Esophagus squamous epithelium (tissue), 5 donors: ENCODE measurements at regions of chr11 and their contacts with region 1.

Region 1: GRCh38 chr11:126062679-126063506 is at the start of gene CDON:
- DNase-seq: peak; percentile 31
- H3K4me3 ChIP-seq: peak within 1 kb of the TSS; percentile 64 to 92 (median 76)
- H3K27ac ChIP-seq: peak within 1 kb of the TSS; percentile 84 to 92 (median 89)
- H3K4me1 ChIP-seq: peaks cover 4 to 31% (median 9%) of the 10 kb centered on the region in 3 donors
- H3K27me3 ChIP-seq: no peaks in the 10 kb centered on the region
- CTCF ChIP-seq: peak in 4 of 6 experiments; percentile 13 to 60 (median 20)
- POLR2A ChIP-seq: peak in 1 of 4 donors; percentile 52
- total RNA-seq, gene CDON: 2.5 to 5.5 (median 3.4) TPM

Region 2: DNA sequence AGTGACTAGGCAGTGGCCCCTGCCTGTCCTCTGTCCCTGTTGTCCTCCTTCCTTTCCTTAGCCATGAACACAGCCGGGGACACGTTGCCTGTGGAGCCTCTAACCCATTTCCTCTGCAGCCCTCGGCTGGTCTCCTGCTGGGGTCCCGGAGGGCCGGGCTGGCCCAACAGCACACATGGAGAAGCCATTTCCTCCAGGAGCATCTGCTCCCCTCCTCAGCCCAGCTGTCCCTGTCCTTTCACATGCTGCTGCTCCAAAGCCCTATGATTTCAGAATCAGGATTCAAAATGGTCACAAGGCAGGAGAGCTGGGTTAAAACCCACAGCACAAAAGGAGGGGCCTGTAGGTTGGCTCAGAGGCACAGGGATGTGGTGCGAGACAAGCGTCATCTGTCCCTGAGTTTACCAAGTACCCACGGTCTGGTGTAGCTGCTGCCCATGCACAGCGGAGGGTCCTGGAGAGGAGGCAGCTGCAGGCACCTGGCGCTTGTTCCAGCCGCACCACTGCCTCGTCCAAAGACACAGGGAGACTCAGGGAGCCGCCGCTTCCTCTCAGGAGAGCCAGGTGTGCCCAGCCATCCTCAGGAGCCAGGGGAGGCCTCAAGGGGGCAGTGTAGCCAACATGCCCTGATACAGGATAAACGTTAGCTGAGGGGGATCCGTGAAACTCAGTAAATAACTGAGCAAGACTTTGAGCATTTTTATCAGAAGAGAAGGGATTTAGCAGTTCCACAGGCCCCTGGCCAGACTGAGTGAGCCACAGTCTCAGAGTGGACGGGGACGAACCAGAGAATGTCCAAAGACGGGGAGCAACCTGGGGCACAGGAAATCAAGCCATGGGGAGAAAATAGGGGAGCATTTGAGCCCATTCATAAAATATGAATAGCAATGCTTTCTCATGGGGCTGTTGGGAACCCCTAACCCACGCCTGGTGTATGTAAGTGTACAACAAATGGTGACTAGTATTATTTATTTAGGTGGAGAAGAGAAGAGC is 121.0 kb before region 1 on chr11:
- intact Hi-C with region 1: loop called (anchors 10 kb)
- DNase-seq: no peak
- H3K4me3 ChIP-seq: no peak overlapping the region
- H3K27ac ChIP-seq: no peak overlapping the region
- H3K4me1 ChIP-seq: peaks cover 0 to 14% (median 0%) of the 10 kb centered on the region in 3 donors
- H3K27me3 ChIP-seq: peaks cover 0 to 4% (median 0%) of the 10 kb centered on the region in 4 donors
- CTCF ChIP-seq: peak in 5 of 6 experiments; percentile 44 to 60 (median 54)
- POLR2A ChIP-seq: no peak

Region 3: DNA sequence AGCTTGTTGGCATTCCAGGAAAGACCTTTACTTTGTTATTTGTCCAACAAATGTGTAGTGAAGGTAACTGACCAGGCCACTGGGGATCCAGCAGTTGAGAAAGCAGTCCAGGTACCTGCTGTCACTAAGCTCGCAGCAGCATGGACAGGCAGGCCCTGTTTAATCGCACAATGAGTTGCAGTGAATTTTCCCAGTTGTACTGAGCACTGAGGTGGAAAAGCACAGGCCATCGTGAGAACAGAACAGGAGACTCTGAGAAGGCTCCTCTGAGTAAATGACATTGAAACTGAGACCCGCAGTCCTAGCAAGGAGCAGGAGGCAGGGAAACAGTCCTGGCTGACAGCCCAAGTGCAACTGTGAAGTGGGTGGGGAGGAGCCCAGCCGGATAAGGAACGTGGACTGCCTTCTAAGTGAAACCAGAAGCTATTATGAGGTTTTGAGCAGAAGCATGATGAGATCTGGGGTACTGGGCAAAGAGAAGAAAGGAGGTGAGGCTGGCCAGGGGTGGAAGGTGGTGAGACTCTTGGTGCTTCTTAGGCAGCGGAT is 39.6 kb after region 1 on chr11:
- intact Hi-C with region 1: no loop called
- DNase-seq: no peak
- H3K4me3 ChIP-seq: no peak overlapping the region
- H3K27ac ChIP-seq: peak overlapping the region in 1 of 4 donors; percentile 18
- H3K4me1 ChIP-seq: peaks cover 0 to 6% (median 0%) of the 10 kb centered on the region in 3 donors
- H3K27me3 ChIP-seq: peaks cover 0 to 18% (median 0%) of the 10 kb centered on the region in 4 donors
- CTCF ChIP-seq: no peak
- POLR2A ChIP-seq: no peak

Region 4: DNA sequence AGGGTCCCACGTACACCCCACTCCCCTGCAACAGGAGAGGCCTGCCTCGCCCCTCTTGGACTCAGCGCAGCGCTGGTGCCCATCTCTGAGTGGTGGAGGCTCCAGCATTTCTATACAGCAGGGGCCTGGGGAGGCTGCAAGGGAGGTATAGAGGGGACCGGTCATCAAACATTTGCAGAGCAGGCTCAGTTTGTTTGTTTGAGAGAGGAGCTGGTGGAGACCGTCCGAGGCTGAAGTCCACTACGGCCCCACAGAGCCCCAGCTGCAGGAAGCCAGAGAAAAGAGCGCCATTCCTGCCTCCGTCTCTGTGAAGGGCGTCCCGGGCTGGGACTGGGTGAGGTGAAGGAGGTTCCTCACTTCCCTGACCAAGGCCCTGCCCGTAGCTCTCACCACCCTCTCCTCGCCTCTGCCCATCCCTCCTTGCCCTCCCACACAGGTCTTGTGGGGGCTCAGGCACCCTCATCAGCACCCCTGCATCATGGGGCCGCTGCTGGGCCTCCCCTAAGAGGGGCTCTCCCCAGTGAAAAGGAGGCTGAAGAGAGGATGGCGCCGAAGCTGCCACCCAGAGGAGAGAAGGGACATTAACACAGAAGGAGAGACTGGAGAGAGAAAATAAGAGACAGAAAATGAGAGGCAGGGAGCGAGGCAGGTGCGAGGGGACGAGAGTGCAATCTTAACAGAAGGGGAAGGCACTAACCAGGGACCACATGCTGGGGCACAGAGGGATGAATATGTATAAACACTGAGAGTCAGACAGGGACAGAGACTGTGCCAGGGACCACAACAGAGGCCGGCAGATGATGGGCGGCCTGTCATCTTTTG is 124.0 kb after region 1 on chr11:
- intact Hi-C with region 1: loop called (anchors 10 kb)
- DNase-seq: no peak
- H3K4me3 ChIP-seq: no peak overlapping the region
- H3K27ac ChIP-seq: no peak overlapping the region
- H3K4me1 ChIP-seq: no peaks in the 10 kb centered on the region
- H3K27me3 ChIP-seq: no peaks in the 10 kb centered on the region
- CTCF ChIP-seq: no peak
- POLR2A ChIP-seq: no peak